Mammary epithelial cell (primary cell): ENCODE measurements at regions of chr14 and their contacts with region 1.

Region 1: DNA sequence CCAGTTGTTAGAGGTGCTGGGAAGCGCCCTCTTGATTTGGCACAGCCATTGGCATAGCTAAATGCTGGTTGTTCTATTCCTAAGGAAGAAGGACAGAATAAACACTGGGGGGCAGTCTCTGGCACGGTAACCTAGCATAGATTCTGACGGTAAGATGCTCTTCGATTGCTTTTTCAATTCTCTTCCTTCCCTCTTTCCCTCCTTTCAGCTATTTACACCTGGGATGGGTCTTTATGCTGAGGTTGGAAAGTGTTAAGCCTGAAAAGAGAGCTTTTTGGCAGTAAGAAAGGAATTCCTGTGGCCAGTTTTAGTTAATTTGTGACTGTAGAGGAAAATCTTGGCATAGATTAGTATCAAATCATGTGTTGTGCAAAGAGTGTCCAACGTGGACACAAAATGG is 162.8 kb downstream of the SNAPC1 start:
- DNase-seq: peak; percentile 16
- H3K4me3 ChIP-seq: no peak overlapping the region
- H3K27ac ChIP-seq: no peak overlapping the region
- H3K4me1 ChIP-seq: peaks cover 28% of the 10 kb centered on the region
- H3K27me3 ChIP-seq: peaks cover 2% of the 10 kb centered on the region
- CTCF ChIP-seq: peak; percentile 24 to 56

Region 2: DNA sequence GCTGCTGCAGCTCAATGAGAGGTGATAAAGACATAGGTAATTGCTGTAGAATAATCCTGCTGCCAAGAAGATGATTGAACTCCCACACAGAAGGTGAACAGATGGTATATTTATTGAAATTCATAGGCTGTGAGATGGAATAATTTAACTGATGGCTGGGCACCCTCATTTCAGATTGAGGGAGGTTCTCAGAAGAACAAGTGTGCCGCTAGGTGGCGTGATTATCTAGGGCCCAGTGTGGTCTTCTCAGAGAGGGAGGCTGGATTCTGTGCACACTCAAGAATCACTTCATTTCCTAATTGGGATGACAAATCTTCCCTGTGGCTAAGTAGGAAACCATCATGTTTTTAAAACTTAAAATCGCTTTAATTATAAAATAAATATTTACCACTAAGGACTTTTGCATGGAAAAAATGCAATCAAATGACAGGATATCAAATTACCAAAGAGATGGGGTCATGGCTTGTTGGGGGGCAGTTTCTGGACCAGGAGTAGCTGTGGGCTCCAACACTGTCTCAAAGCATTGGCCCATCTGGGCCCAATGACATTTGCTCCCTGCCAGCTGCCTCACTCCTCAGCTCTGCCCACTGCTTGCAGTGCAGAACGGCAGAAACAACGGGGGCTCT is 30.5 kb before region 1 on chr14:
- CTCF ChIA-PET with region 1: interaction called, 4 read pairs
- dilution Hi-C with region 1: no loop called
- in situ Hi-C with region 1: no loop called
- intact Hi-C with region 1: loop called (anchors 1 kb)
- DNase-seq: peak; percentile 56
- H3K4me3 ChIP-seq: no peak overlapping the region
- H3K27ac ChIP-seq: no peak overlapping the region
- H3K4me1 ChIP-seq: no peaks in the 10 kb centered on the region
- H3K27me3 ChIP-seq: no peaks in the 10 kb centered on the region
- CTCF ChIP-seq: peak; percentile 79 to 84

Region 3: GRCh38 chr14:61977217-61977616 is 52.2 kb after region 1 on chr14:
- CTCF ChIA-PET with region 1: no interaction called
- dilution Hi-C with region 1: no loop called
- in situ Hi-C with region 1: no loop called
- intact Hi-C with region 1: no loop called
- DNase-seq: no peak
- H3K4me3 ChIP-seq: no peak overlapping the region
- H3K27ac ChIP-seq: no peak overlapping the region
- H3K4me1 ChIP-seq: peaks cover 12% of the 10 kb centered on the region
- H3K27me3 ChIP-seq: no peaks in the 10 kb centered on the region
- CTCF ChIP-seq: no peak

Region 4: GRCh38 chr14:62030387-62030786 is 105.3 kb after region 1 on chr14:
- CTCF ChIA-PET with region 1: no interaction called
- dilution Hi-C with region 1: no loop called
- in situ Hi-C with region 1: no loop called
- intact Hi-C with region 1: loop called (anchors 10 kb)
- DNase-seq: no peak
- H3K4me3 ChIP-seq: no peak overlapping the region
- H3K27ac ChIP-seq: no peak overlapping the region
- H3K4me1 ChIP-seq: no peaks in the 10 kb centered on the region
- H3K27me3 ChIP-seq: no peaks in the 10 kb centered on the region
- CTCF ChIP-seq: no peak

Region 5: DNA sequence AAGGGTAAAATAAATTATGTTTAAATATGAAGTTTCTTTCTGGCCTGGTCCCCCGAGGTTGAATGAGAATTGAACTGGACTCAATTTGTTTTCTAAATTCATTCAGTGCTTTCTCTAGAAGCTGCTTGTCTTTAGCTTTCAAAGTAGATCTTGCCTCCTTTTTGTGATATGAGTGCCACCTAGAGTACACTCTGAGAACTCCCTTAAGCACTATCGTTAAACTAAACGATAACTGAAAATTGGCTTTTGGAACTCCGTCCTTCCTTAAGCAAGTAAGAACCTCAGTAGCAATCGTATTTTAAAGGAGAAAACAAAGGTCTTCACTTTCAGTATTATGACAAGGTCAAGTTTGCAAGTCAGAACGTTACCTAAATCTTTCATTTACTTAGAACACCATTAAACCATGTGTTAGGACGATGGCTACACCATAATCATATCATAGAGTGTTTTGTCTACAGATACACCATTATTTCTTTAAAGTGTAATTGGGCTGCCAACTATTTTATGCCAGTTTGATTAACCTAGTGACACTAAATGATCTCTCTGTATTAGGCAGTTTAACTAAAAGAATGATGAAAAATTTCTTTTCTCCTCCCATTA is 201.9 kb after region 1 on chr14:
- CTCF ChIA-PET with region 1: interaction called, 29 read pairs
- dilution Hi-C with region 1: no loop called
- in situ Hi-C with region 1: loop called in 1 of 2 experiments (anchors 10 kb)
- intact Hi-C with region 1: loop called (anchors 1 kb)
- DNase-seq: peak; percentile 43
- H3K4me3 ChIP-seq: no peak overlapping the region
- H3K27ac ChIP-seq: no peak overlapping the region
- H3K4me1 ChIP-seq: no peaks in the 10 kb centered on the region
- H3K27me3 ChIP-seq: peaks cover 7% of the 10 kb centered on the region
- CTCF ChIP-seq: peak; percentile 76 to 83

Region 6: DNA sequence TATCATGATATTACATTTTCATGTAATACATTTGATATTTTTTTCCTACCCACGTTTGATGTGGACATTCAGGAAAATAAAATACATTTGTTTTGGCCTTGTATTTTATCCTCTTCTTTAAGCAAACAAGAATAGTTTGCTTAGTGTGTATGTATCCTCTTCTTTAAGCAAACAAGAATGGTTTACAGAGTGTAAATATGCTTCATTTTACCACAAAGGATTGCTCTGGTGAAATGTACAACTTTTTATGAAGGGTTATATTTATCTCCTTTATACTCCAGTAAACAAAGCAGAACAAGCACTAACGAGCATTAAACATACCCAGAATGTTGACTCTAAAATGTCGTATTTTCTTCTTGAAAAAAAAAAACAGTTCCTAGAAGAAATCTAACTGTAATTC is 875.5 kb after region 1 on chr14:
- CTCF ChIA-PET with region 1: no interaction called
- dilution Hi-C with region 1: no loop called
- in situ Hi-C with region 1: no loop called
- intact Hi-C with region 1: no loop called
- DNase-seq: no peak
- H3K4me3 ChIP-seq: no peak overlapping the region
- H3K27ac ChIP-seq: no peak overlapping the region
- H3K4me1 ChIP-seq: no peaks in the 10 kb centered on the region
- H3K27me3 ChIP-seq: no peaks in the 10 kb centered on the region
- CTCF ChIP-seq: no peak